ENCODE measurements at regions of chr2 and their contacts with region 1.

Region 1: DNA sequence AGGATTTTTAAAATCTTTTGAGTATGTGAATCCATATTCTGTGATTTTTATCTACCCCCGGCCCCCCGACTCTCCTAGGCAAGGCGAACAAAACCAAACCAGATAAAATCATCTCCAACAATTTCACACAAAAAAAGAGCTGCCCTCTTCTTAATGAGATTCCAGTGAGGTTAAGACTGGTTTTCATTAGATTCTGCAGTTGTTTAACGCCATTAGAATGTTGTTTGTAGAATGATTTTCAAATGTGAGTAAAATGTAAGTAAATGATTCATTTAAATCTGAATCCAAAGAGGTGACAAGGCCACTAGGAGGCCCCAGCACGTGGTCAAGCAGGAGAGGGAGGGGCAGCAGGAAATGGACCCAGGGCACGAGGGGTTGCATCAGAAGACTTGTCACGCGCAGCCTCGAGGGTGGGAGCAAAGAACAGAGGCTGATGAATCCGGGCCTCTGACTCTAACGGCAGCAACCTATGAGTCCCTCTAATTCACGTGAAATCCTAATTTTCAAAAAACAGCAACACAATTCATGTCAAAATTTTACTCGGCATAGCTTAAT is 24.3 kb upstream of the KLHL29 start:
- DNase-seq: no peak
- H3K4me3 ChIP-seq: no peak overlapping the region
- H3K27ac ChIP-seq: no peak overlapping the region
- H3K4me1 ChIP-seq: no peaks in the 10 kb centered on the region
- H3K27me3 ChIP-seq: no peaks in the 10 kb centered on the region
- CTCF ChIP-seq: no peak

Region 2: GRCh38 chr2:23757686-23758433 is 397.2 kb after region 1 on chr2:
- intact Hi-C with region 1: loop called (anchors 10 kb)
- DNase-seq: no peak
- H3K4me3 ChIP-seq: no peak overlapping the region
- H3K27ac ChIP-seq: no peak overlapping the region
- H3K4me1 ChIP-seq: no peaks in the 10 kb centered on the region
- H3K27me3 ChIP-seq: no peaks in the 10 kb centered on the region
- CTCF ChIP-seq: no peak

Measured in tibial artery (tissue), 4 donors.